ENCODE measurements at regions of chr14 and their contacts with region 1.

Region 1: GRCh38 chr14:24160850-24161804 is at the start of gene IRF9:
- DNase-seq: peak; percentile 98
- H3K4me3 Mint-ChIP-seq: peak within 1 kb of the TSS; percentile 99
- H3K27ac Mint-ChIP-seq: peak within 1 kb of the TSS; percentile 99
- H3K4me1 Mint-ChIP-seq: peaks cover 60% of the 10 kb centered on the region
- H3K27me3 Mint-ChIP-seq: peaks cover 4% of the 10 kb centered on the region
- total RNA-seq, gene IRF9: 130 and 152 TPM in 2 replicates

Region 2: DNA sequence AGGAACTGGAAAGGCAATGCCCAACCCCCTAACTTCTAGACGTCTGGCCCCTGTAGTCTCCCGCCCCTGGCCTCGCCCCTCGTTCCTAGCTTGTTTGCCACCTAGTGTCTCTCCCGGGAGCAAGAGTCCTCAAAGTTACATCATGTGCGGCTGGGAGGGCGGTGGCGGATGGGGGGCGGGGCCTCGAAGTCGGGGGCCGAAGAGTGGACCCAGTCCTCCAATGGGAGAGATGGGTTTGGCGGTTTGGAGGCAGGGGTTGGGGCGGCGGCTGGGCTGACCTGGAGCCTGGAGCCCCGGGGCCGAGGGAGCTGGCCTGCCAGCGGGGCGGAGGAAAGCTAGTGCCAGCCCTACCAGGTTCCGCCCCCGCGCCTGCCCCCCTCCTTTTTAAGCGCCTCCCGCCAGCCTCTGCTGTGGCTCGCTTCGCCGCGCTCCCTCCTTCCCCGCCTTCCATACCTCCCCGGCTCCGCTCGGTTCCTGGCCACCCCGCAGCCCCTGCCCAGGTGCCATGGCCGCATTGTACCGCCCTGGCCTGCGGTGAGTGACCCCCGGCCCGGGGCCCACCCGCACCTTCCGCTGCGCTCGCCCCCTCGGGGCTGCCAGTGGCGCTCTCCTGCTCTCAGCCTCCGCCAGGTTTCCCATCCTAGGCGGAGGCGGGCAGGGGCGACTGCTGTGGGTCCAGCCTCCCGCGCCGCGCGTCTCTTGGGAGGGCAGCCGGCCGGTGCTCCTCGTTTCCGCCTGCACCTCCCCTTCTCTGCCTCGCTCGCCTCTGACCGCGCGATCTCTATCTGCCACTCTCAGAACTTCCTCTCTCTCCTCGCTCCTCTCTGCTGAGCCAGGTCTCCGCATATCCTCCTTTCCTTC is 67.0 kb before region 1 on chr14 and contains the start of gene PCK2:
- intact Hi-C with region 1: loop called (anchors 1 kb)
- DNase-seq: peak; percentile 70
- H3K4me3 Mint-ChIP-seq: peak within 1 kb of the TSS; percentile 100
- H3K27ac Mint-ChIP-seq: peak within 1 kb of the TSS; percentile 97
- H3K4me1 Mint-ChIP-seq: peaks cover 36% of the 10 kb centered on the region
- H3K27me3 Mint-ChIP-seq: no peaks in the 10 kb centered on the region
- total RNA-seq, gene PCK2: 55.0 and 62.8 TPM in 2 replicates

Region 3: DNA sequence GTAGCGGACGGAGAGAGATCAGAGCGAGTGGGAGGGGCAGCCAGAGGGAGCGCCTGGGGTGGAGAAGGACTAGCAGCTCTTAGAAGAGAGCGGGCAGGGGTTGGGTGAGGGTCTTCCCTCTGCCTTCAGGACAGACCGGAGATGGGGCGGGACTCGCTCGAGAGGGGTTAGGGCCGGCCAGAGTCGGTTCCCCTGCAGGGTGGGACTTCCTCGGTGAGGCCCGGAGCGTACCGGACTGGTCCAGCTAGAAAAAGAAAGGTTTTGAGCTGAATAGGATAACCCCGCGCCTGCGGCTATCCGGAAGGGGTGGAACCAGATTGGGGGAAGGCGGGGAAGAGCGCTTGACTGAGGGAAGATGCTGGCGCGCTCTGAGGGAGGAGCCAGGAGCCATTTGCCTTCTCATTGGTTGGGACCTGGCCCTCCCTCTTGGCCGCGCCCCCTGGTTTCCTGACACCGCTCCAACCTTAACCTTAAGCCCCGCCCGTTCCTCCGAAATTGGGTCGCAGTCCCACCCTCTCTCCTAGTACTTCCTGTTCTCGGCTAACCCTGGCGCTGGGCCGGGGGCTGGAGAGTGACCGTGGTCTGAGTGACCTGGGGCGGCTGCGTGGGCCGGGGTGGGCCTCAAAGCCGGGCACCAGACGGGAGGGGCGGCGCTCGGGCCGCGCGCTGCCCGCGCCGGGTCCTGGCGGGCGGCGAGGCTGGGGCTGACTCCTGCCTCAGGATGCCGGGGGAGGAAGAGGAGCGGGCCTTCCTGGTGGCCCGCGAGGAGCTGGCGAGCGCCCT is 14.0 kb before region 1 on chr14 and contains the start of gene RNF31:
- intact Hi-C with region 1: loop called (anchors 1 kb)
- DNase-seq: peak; percentile 97
- H3K4me3 Mint-ChIP-seq: peak within 1 kb of the TSS; percentile 94
- H3K27ac Mint-ChIP-seq: peak within 1 kb of the TSS; percentile 98
- H3K4me1 Mint-ChIP-seq: peaks cover 62% of the 10 kb centered on the region
- H3K27me3 Mint-ChIP-seq: no peaks in the 10 kb centered on the region
- total RNA-seq, gene RNF31: 115 and 129 TPM in 2 replicates

Region 4: GRCh38 chr14:24215495-24216344 is 54.6 kb after region 1 on chr14 and contains the start of gene MDP1:
- intact Hi-C with region 1: loop called (anchors 1 kb)
- DNase-seq: peak; percentile 85
- H3K4me3 Mint-ChIP-seq: peak within 1 kb of the TSS; percentile 90
- H3K27ac Mint-ChIP-seq: peak within 1 kb of the TSS; percentile 96
- H3K4me1 Mint-ChIP-seq: peaks cover 43% of the 10 kb centered on the region
- H3K27me3 Mint-ChIP-seq: no peaks in the 10 kb centered on the region
- total RNA-seq, gene MDP1: 11.6 and 12.9 TPM in 2 replicates

Region 5: GRCh38 chr14:24299255-24300195 is 138.4 kb after region 1 on chr14 and contains the starts of genes DHRS1 and NOP9:
- intact Hi-C with region 1: loop called (anchors 1 kb)
- DNase-seq: peak; percentile 90
- H3K4me3 Mint-ChIP-seq: peak within 1 kb of the TSS; percentile 94
- H3K27ac Mint-ChIP-seq: peak within 1 kb of the TSS; percentile 96
- H3K4me1 Mint-ChIP-seq: peaks cover 44% of the 10 kb centered on the region
- H3K27me3 Mint-ChIP-seq: no peaks in the 10 kb centered on the region
- total RNA-seq, gene DHRS1: 7.5 TPM in 2 replicates
- total RNA-seq, gene NOP9: 49.3 and 52.6 TPM in 2 replicates

Region 6: DNA sequence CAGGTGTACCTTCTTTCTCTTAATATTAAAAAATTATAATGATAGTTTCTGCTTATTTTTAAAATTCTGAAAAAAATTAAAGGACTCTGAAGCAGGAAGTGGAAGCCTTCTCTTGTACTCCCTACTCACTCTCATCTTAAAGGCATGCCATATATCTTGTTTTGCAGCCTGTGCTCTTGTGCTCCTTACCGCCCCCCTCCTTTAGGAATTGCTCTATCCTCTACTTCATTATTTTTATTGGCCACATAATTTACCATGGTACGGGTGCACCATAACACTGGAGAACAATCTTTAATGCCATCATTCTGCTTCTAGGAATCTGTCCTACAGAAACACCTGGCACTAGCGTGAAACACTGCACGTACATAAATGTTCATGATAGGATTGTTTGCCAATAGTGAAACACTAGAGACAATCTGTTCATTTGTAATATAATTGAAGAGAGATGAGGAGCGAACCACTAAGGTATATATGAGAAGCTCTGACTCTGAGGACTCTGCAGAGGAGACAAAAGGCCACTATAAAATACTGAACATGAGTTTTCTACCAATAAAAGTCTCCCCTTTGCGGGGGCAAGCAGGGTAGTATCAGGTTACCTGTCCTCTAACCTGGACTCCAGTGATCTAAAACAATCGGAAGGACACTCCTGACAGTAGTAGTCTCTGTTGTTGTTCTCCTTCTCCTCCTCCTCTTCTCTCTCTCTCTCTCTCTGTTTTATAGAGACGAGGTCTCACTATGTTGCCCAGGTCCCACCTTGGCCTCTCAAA is 231.4 kb after region 1 on chr14:
- intact Hi-C with region 1: no loop called
- DNase-seq: no peak
- H3K4me3 Mint-ChIP-seq: no peak overlapping the region
- H3K27ac Mint-ChIP-seq: no peak overlapping the region
- H3K4me1 Mint-ChIP-seq: no peaks in the 10 kb centered on the region
- H3K27me3 Mint-ChIP-seq: peaks cover 19% of the 10 kb centered on the region